Left cardiac atrium (tissue), 4 donors: ENCODE measurements at regions of chr3 and their contacts with region 1.

Region 1: DNA sequence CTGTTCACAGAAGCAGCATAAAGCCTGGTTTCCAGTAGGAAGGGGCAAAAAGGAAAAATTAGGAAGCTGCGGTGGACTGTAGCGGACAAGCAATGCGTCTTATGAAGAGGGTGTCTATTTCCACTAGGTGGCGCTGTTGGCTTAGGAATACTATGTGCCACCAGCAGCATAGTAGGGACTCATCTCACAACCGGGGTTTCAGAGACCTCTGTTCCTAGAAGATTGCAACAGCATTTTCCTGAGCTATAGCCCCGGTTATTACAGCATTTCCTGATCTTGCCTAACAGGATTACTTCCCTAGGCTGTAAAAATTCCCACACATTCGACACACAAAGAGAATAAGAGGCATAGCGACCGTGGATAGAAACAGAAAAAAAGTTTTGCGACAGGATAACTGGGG is 683.0 kb downstream of the TBL1XR1 start:
- DNase-seq: no peak
- ATAC-seq: peak; percentile 51 to 59

Region 2: GRCh38 chr3:175941356-175941755 is 572.9 kb before region 1 on chr3:
- intact Hi-C with region 1: no loop called
- DNase-seq: no peak
- ATAC-seq: no peak

Region 3: GRCh38 chr3:176663837-176664831 is 149.8 kb after region 1 on chr3:
- intact Hi-C with region 1: loop called in 1 of 2 experiments (anchors 5 kb)
- DNase-seq: no peak
- ATAC-seq: peak; percentile 68 to 74